ENCODE measurements at regions of chr6 and their contacts with region 1.

Region 1: DNA sequence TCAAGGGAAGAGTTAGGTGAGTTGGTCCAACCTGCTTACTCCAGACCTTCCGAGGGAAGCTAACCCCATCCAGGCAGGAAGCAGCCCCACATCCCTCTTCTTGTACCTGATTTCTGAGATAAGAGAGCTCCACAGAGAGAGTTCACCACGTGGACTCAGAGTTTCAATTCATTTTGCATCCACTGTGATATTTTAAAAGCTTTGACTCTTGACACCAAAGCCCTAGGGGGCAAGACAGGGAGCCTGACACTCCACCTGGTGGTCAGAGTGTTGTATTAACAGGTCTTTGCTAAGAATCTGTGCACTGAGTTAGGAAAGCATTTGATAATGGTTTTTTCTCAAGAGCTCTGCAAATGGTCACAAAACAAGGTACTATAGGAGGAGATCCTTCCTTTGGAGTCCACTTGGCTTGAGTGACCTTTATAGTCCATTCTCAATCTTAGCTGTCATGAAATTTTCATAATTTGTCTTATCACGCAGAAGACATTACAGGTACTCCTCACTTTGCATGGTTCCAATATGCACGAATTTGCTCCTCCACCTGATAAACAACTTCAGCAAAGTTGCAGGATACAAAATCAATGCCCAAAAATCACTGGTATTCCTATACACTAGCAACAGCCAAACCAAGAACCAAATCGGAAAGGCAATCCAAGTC is 56.2 kb upstream of the RIPOR2 start:
- DNase-seq: peak; percentile 75 to 89 (median 88)
- H3K4me3 ChIP-seq: peak overlapping the region in 1 of 7 experiments; percentile 8
- H3K27ac ChIP-seq: no peak overlapping the region
- H3K4me1 ChIP-seq: peaks cover 12 to 26% (median 22%) of the 10 kb centered on the region in 4 experiments
- H3K27me3 ChIP-seq: no peaks in the 10 kb centered on the region

Region 2: DNA sequence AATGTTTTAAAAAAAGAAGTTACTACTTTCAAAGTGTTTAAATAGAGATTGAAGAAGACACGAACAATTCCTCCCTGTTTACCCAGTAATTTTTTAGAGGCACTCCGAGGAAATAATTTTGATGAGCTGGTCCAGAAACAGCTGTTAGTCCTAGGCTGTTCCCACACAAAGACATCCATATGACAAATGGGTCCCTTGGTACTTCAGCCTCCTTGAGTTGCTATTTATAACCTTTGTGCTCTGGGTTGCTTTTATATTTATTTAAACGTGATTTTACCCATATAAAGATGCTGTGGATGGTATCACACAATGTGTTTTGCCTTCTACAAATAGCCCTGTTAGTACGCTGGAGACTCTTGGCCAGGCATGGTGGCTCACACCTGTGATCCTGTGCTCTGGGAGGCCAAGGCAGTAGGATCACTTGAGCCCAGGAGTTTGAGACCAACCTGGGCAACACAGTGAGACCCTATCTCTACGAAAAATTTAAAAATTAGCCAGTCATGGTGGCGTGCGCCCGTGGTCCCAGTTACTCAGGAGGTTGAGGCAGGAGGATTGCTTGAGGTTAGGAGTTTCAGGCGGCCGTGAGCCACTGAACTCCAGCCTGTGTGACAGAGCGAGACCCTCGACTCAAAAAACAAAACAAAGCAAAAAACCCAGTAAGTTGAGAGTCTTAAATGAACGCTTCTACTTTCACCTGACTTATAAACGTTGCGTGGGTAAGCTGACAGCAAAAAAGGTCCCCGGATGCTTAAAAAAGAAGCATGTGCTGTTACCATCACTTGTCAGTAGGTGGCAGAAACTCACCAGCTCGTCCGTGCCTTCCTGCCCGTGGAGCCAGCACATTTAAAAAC is 136.3 kb before region 1 on chr6:
- CTCF ChIA-PET with region 1: interaction called, 55 read pairs
- POLR2A ChIA-PET with region 1: no interaction called
- DNase-seq: peak; percentile 79 to 90 (median 85)
- H3K4me3 ChIP-seq: no peak overlapping the region
- H3K27ac ChIP-seq: no peak overlapping the region
- H3K4me1 ChIP-seq: peaks cover 15 to 36% (median 26%) of the 10 kb centered on the region in 4 experiments
- H3K27me3 ChIP-seq: no peaks in the 10 kb centered on the region

Region 3: DNA sequence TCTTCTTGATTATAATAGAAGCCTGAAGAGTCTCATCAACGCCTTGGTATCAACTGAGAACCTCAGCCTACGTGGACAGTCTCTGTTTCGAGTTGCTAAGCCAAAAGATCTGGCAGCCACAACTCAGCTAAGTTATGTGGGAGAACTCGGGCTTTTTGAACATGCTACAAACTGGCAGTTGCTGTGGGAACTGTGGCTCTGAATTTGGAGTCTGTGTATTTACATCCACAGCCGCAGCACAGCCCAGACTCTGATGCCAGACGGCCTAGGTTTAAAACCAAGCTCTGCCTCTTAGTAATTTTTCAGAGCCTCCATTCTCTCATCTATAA is 92.0 kb before region 1 on chr6:
- CTCF ChIA-PET with region 1: interaction called, 16 read pairs
- POLR2A ChIA-PET with region 1: no interaction called
- DNase-seq: peak in 2 of 3 donors; percentile 25 to 51
- H3K4me3 ChIP-seq: peak overlapping the region in 1 of 7 experiments; percentile 8
- H3K27ac ChIP-seq: peak overlapping the region in 1 of 2 experiments; percentile 47
- H3K4me1 ChIP-seq: peaks cover 0 to 18% (median 2%) of the 10 kb centered on the region in 4 experiments
- H3K27me3 ChIP-seq: no peaks in the 10 kb centered on the region

Region 4: GRCh38 chr6:24910961-24911712 is 80.8 kb before region 1 on chr6:
- CTCF ChIA-PET with region 1: interaction called, 43 read pairs
- POLR2A ChIA-PET with region 1: no interaction called
- DNase-seq: peak; percentile 55 to 85 (median 78)
- H3K4me3 ChIP-seq: peak overlapping the region; percentile 23 to 82 (median 65)
- H3K27ac ChIP-seq: no peak overlapping the region
- H3K4me1 ChIP-seq: peaks cover 12 to 48% (median 39%) of the 10 kb centered on the region in 4 experiments
- H3K27me3 ChIP-seq: no peaks in the 10 kb centered on the region

Region 5: DNA sequence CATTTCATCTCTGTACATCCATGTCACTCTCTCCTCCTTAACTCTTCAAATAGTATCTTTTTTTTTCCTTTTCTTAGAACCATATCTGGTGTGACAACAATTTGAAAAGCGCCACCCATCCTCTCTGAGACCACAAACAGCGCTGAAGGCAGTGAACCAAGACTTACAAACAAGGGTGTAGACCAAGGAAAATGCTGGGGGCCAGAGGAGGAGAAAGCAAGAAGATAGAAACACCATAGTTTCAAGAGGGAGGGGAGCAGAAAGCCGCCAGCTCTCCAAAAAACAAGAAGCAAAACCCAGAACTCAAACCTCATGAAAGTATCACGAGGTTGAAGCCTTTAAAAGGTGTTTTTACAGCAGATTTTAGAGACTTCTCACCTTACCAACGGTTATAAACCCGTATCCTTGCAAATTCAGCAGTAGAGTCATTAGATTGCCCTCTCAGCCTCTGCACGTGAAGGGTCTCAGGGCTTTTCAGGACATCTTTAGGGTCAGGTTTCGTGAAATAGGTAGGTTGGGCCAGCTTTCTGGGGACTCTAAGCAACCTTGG is 42.8 kb before region 1 on chr6:
- CTCF ChIA-PET with region 1: interaction called, 25 read pairs
- POLR2A ChIA-PET with region 1: no interaction called
- DNase-seq: peak in 2 of 3 donors; percentile 61 to 69
- H3K4me3 ChIP-seq: no peak overlapping the region
- H3K27ac ChIP-seq: peak overlapping the region in 1 of 2 experiments; percentile 62
- H3K4me1 ChIP-seq: peaks cover 31 to 47% (median 40%) of the 10 kb centered on the region in 4 experiments
- H3K27me3 ChIP-seq: no peaks in the 10 kb centered on the region

Region 6: DNA sequence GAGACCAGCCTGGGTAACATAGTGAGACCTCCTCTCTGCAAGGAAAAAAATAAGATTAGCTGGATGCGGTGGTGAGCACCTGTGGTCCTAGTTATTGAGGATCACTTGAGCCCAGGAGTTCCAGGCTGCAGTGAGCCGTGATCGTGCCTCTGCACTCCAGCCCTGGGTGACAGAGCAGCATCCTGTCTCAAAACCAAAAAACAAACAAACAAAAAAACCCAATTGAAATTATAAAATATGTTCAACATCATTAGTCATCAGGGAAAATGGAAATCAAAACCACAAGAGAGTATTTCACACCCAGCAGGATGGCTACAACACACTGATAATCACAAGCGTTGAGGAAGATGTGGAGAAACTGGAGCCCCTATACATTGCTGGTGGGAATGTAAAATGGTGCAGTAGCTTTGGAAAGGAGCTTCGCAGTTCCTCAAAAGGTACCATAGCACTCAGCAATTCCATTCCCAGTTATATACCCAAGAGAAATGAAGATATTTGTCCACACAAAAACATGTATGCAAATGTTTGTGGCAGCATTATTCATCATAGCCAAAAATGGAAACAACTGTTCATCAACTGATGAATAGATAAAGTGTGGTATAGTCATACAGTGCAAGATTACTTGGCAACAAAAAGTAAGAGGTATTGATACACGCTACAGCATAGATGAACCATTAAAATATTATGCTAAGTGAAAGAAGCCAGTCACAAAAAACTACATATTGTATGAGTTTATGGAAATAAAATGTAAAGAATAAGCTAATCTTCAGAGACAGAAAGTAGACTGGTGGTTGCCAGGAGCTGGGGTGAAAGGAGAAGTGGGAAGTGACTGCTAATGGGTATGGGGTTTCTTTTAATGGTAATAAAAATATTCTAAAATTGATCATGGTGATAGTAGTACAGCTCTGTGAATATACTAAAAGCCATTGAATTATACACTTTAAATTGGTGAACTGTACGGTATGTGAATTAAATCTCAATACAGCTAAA is 17.5 kb before region 1 on chr6:
- CTCF ChIA-PET with region 1: interaction called, 10 read pairs
- POLR2A ChIA-PET with region 1: interaction called, 3 read pairs
- DNase-seq: peak in 2 of 3 donors; percentile 67 to 79
- H3K4me3 ChIP-seq: peak overlapping the region in 1 of 7 experiments; percentile 26
- H3K27ac ChIP-seq: peak overlapping the region in 1 of 2 experiments; percentile 50
- H3K4me1 ChIP-seq: peaks cover 2 to 25% (median 14%) of the 10 kb centered on the region in 4 experiments
- H3K27me3 ChIP-seq: no peaks in the 10 kb centered on the region

Region 7: DNA sequence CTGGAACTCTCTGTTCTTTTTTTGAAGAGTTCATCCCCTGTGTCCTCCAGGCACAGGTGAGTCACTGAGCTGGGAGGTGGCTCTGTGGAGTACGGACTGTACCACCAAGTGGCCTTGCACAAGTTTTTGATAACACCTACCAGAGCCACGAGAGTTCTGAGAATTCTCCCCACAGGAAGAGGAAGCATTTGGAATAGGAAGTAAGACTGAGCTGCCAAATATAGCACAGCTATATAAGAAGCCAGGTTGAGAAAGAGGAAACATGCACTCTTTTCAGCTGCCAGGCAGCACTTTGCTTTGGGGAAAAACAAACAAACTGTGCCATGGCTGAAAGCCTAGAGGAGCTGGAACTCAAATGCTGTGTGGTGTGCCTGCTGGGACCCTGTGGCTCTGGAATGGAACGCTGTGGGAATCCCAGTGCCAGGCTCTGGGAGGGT is 14.6 kb after region 1 on chr6:
- CTCF ChIA-PET with region 1: interaction called, 25 read pairs
- POLR2A ChIA-PET with region 1: interaction called, 3 read pairs
- DNase-seq: peak; percentile 78 to 91 (median 90)
- H3K4me3 ChIP-seq: peak overlapping the region in 5 of 7 experiments; percentile 12 to 42 (median 29)
- H3K27ac ChIP-seq: peak overlapping the region; percentile 96 to 97
- H3K4me1 ChIP-seq: peaks cover 35 to 91% (median 67%) of the 10 kb centered on the region in 4 experiments
- H3K27me3 ChIP-seq: no peaks in the 10 kb centered on the region

Measured in common myeloid progenitor, CD34-positive (primary cell).